MCF 10A (cell line): ENCODE measurements at regions of chr3 and their contacts with region 1.

Region 1: GRCh38 chr3:39000008-39000450 is 51.7 kb downstream of the SCN11A start:
- DNase-seq: peak; percentile 55
- H3K4me3 Mint-ChIP-seq: no peak overlapping the region
- H3K27ac Mint-ChIP-seq: no peak overlapping the region
- H3K4me1 Mint-ChIP-seq: peaks cover 6% of the 10 kb centered on the region
- H3K27me3 Mint-ChIP-seq: peaks cover 48% of the 10 kb centered on the region
- CTCF ChIP-seq: peak; percentile 78

Region 2: DNA sequence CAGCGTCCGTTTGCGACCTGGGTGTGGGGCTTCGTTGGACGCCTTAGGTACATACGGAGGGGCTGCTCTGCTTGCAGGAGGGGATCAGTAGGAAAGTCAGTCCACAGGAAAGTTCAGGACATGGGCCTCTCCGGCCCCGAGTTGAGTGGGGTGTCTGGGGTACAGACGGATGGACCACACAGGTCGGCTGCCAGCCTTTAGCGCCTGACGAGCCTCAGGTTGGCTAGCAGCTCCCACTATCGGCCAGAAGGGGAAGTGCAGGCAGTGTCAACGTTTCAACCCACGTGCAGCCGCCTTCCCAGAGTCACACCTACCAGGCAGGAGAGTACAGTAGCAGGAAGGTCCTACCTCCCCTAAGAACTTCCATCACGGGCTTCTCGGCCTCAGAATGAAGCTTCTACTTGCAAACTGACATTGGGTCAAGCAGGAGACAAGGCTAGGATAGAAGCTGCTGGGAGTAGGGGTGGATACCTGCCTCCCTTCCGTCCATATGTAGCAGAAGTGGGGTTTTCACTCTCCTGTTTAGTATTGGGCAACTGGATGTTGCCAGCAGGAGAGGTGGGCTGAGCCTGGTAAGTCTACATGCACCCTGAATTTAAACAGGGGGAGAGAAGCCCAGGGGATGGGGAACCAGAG is 348.8 kb before region 1 on chr3:
- CTCF ChIA-PET with region 1: interaction called, 8 read pairs
- POLR2A ChIA-PET with region 1: no interaction called
- intact Hi-C with region 1: loop called (anchors 10 kb)
- DNase-seq: peak; percentile 59
- H3K4me3 Mint-ChIP-seq: no peak overlapping the region
- H3K27ac Mint-ChIP-seq: no peak overlapping the region
- H3K4me1 Mint-ChIP-seq: no peaks in the 10 kb centered on the region
- H3K27me3 Mint-ChIP-seq: no peaks in the 10 kb centered on the region
- CTCF ChIP-seq: peak; percentile 83

Region 3: DNA sequence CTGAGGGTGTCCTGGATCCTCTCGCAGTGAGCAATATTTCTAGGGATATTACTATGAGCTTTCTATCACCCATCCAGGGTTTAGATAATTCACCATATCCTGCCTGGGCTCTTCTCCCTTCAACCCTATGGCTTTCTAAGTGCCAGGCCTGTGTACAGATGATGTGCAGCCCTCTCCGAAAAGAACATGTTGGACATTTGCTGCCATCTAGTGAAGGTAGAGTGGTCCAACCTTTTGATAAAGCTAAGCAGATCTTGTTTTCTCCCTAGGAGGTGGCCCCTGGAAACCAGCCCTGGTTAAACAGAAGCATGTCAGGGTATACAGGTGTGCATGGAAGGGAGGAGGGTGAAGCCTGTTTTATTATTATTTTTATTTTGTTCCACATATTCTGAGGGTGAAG is 156.1 kb before region 1 on chr3:
- CTCF ChIA-PET with region 1: interaction called, 3 read pairs
- POLR2A ChIA-PET with region 1: no interaction called
- intact Hi-C with region 1: loop called (anchors 10 kb)
- DNase-seq: peak; percentile 55
- H3K4me3 Mint-ChIP-seq: no peak overlapping the region
- H3K27ac Mint-ChIP-seq: no peak overlapping the region
- H3K4me1 Mint-ChIP-seq: no peaks in the 10 kb centered on the region
- H3K27me3 Mint-ChIP-seq: peaks cover 71% of the 10 kb centered on the region
- CTCF ChIP-seq: peak; percentile 53

Region 4: GRCh38 chr3:38985581-38985980 is 14.4 kb before region 1 on chr3:
- CTCF ChIA-PET with region 1: interaction called, 13 read pairs
- POLR2A ChIA-PET with region 1: no interaction called
- intact Hi-C with region 1: no loop called
- DNase-seq: no peak
- H3K4me3 Mint-ChIP-seq: no peak overlapping the region
- H3K27ac Mint-ChIP-seq: no peak overlapping the region
- H3K4me1 Mint-ChIP-seq: no peaks in the 10 kb centered on the region
- H3K27me3 Mint-ChIP-seq: peaks cover 12% of the 10 kb centered on the region
- CTCF ChIP-seq: no peak

Region 5: DNA sequence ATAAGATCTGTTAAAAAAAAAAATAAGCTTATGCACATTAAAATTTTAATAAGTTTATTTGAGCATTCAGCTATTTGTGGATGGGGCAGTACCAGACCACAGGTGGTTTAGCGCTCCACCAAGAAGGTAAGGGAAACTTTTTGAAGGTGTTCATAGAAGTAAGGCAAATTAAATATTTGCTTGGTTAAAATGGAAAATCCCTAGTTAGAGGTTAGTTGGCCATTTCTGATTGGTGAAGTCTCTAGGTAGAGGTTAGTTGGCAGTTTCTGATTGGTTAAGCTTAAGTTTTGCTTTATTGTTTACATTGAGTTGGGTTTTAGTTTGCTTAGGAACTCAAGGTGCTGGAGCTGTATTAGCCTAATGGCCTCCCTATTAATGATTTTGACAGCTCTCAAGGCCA is 21.0 kb after region 1 on chr3:
- CTCF ChIA-PET with region 1: interaction called, 48 read pairs
- POLR2A ChIA-PET with region 1: no interaction called
- intact Hi-C with region 1: no loop called
- DNase-seq: no peak
- H3K4me3 Mint-ChIP-seq: no peak overlapping the region
- H3K27ac Mint-ChIP-seq: no peak overlapping the region
- H3K4me1 Mint-ChIP-seq: no peaks in the 10 kb centered on the region
- H3K27me3 Mint-ChIP-seq: peaks cover 16% of the 10 kb centered on the region
- CTCF ChIP-seq: no peak

Region 6: DNA sequence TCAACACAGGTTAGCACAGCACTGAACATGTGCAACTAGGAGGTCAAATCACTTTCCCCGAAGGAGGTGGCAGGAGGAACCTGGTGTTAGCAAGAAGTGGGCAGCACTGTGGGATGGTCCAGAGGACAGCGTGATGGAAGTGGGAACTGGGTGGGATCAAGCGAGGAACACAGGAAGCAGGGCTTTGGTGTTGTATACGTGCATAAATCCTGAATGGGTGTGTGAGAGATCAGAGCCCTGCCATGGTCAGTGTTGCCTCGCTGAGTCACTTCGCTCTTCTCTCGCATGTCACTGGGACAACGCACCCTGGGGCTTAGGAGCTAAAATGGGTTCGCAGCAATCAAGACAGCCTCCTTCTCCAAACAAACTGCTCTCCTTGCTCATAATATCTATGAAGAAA is 529.6 kb after region 1 on chr3:
- CTCF ChIA-PET with region 1: no interaction called
- POLR2A ChIA-PET with region 1: no interaction called
- intact Hi-C with region 1: no loop called
- DNase-seq: no peak
- H3K4me3 Mint-ChIP-seq: no peak overlapping the region
- H3K27ac Mint-ChIP-seq: no peak overlapping the region
- H3K4me1 Mint-ChIP-seq: peaks cover 22% of the 10 kb centered on the region
- H3K27me3 Mint-ChIP-seq: no peaks in the 10 kb centered on the region
- CTCF ChIP-seq: no peak